BJ (cell line): ENCODE measurements at regions of chr1 and their contacts with region 1.

Region 1: DNA sequence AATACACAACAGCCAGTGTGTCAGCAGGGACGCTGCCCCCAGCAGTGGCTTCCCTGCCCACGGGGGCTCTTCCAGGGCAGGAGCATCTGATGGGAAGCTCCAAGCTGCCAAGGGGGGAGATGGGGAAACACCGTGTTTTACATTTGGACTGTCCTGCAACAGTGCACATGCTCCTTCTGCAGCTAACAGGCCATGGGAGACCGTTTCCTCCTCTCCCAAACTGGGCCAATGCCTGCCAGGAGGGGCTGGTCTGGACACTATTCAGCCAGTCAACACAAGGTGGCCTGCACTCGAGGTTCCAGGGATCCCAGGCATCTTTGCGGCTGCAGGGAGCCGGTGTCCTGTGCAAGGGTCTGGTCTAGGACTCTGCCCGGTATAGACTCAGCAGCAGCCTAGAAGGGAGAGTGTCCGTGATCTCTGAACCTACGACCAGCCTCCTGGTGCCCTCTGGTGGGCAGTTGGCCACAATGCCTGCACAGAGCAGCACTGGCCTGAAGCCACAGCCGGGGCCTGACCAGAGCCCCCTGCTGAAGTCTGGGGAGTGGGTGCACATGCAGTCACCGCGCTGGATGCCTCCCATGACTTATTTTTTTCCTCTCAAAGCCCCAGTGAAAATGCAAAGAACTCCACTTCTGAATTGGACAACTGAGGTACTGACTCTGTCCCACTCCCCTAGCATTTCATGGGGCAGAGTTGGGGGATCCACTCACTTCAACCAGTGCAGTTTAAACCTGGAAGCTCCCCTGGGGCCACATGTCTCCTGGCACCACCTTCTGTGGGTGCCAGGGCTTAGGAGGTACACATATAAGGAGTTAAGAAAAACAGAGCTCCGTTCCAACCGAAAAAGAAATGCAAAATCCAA is 33.3 kb downstream of the RCC2 start:
- DNase-seq: no peak
- H3K4me3 ChIP-seq: no peak overlapping the region
- H3K27me3 ChIP-seq: no peaks in the 10 kb centered on the region
- CTCF ChIP-seq: peak; percentile 86

Region 2: GRCh38 chr1:17059739-17060460 is 346.2 kb before region 1 on chr1:
- CTCF ChIA-PET with region 1: interaction called, 20 read pairs
- POLR2A ChIA-PET with region 1: no interaction called
- DNase-seq: peak; percentile 4
- H3K4me3 ChIP-seq: no peak overlapping the region
- H3K27me3 ChIP-seq: no peaks in the 10 kb centered on the region; the same call in 1 of the 2 replicates
- CTCF ChIP-seq: peak; percentile 84

Region 3: DNA sequence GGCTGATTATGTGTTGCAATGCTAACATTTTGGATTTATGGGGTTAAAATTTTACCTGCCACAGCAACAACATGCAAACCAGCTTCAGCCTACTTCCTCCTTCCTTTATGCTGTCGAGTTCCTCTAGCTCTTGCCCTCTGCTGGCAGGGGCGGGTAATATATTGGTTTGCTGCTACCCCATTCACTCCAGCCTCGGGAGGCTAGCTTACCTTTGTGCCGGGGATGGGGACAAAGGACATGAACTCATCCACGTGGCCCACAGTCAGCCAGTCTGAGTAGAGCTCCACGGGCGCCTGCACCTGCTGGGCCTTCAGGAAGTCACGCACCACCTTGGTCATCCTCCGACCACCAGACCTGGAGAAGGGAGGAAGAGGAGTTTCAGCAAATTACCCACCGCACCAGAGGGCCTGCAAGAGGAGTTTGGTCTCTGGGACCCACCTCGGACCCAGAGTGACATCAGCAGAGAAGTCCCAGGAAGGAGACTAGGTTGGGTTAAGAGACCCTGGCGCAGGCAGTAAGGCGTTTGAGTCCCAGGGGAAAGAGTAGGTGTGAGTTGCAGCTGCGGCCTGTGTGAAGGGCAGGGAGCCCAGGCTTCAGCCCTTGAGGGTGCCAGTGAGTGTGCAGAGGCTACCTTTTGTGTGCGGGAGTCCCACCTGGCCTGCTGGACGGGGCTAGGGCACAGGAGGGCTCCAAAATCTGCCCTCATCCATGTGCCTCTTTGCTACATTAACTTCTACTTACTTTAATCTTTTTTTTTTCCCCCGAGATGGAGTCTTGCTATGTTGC is 330.5 kb before region 1 on chr1:
- CTCF ChIA-PET with region 1: no interaction called
- POLR2A ChIA-PET with region 1: no interaction called
- DNase-seq: no peak
- H3K4me3 ChIP-seq: no peak overlapping the region
- H3K27me3 ChIP-seq: peaks cover 3% of the 10 kb centered on the region
- CTCF ChIP-seq: peak; percentile 45

Region 4: GRCh38 chr1:17274186-17275170 is 131.7 kb before region 1 on chr1:
- CTCF ChIA-PET with region 1: no interaction called
- POLR2A ChIA-PET with region 1: no interaction called
- DNase-seq: no peak
- H3K4me3 ChIP-seq: no peak overlapping the region
- H3K27me3 ChIP-seq: no peaks in the 10 kb centered on the region
- CTCF ChIP-seq: peak; percentile 78

Region 5: GRCh38 chr1:17393230-17393629 is 12.9 kb before region 1 on chr1:
- CTCF ChIA-PET with region 1: interaction called, 29 read pairs
- POLR2A ChIA-PET with region 1: no interaction called
- DNase-seq: no peak
- H3K4me3 ChIP-seq: no peak overlapping the region
- H3K27me3 ChIP-seq: peaks cover 12% of the 10 kb centered on the region
- CTCF ChIP-seq: no peak